Heart right ventricle (tissue), 16 donors: ENCODE measurements at regions of chr9 and their contacts with region 1.

Region 1: GRCh38 chr9:96418074-96418809 is at the start of gene ZNF367:
- DNase-seq: peak; percentile 98
- ATAC-seq: peak; percentile 90 to 96 (median 92)
- H3K4me3 ChIP-seq: peak within 1 kb of the TSS; percentile 56 to 97 (median 85)
- H3K27ac ChIP-seq: peak within 1 kb of the TSS; percentile 95 to 100 (median 99)
- H3K4me1 ChIP-seq: peaks cover 7 to 52% (median 33%) of the 10 kb centered on the region in 9 donors
- H3K27me3 ChIP-seq: no peaks in the 10 kb centered on the region
- CTCF ChIP-seq: no peak
- total RNA-seq, gene ZNF367: 2.4 to 6.4 (median 4.0) TPM

Region 2: GRCh38 chr9:96344458-96345180 is 73.6 kb before region 1 on chr9:
- intact Hi-C with region 1: loop called in 1 of 10 experiments (anchors 5 kb)
- DNase-seq: peak; percentile 23 to 59
- ATAC-seq: peak; percentile 78 to 95 (median 92)
- H3K4me3 ChIP-seq: no peak overlapping the region
- H3K27ac ChIP-seq: peak overlapping the region in 9 of 10 donors; percentile 35 to 69 (median 49)
- H3K4me1 ChIP-seq: peaks cover 3 to 27% (median 17%) of the 10 kb centered on the region in 9 donors
- H3K27me3 ChIP-seq: no peaks in the 10 kb centered on the region
- CTCF ChIP-seq: no peak

Region 3: DNA sequence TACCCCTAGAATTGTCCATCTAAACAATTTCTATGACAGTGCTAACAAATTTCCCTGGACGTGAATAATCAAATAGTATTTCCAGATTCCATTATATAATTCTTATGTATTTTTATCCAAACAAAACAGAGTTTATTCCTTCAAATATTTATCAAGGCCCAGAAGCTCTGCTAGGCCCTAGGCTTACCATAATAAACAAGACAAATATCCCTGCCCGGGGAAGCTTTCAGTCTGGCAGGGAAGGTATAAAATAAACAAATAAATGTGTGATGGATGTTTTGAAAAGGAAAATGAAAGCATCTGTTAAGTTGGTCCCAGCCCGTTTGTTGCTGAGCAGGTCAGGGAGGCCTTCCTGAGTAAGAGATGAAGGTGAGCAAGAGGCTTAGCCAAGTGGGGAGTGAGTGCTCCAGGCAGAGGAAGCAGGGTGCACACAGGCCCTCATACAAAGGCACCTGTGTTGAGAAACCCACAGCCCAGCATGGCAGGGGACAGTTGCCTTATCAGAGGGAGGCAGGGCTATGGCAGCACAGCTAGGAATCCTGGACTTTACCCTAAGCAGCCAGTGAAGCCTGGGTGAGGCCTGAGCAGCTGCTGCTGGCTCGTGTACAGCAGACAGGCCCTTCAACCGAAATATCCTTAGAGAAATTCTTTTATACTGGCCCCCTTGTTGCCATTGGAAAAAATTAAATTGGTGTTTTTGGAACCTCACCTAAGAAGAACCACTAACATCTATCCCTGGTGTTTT is 27.0 kb before region 1 on chr9:
- intact Hi-C with region 1: loop called in 1 of 10 experiments (anchors 2 kb)
- DNase-seq: no peak
- ATAC-seq: peak in 1 of 8 donors; percentile 43
- H3K4me3 ChIP-seq: no peak overlapping the region
- H3K27ac ChIP-seq: peak overlapping the region in 1 of 10 donors; percentile 8
- H3K4me1 ChIP-seq: peaks cover 0 to 8% (median 5%) of the 10 kb centered on the region in 9 donors
- H3K27me3 ChIP-seq: no peaks in the 10 kb centered on the region
- CTCF ChIP-seq: no peak

Region 4: GRCh38 chr9:96486368-96487028 is 68.3 kb after region 1 on chr9:
- intact Hi-C with region 1: loop called in 1 of 10 experiments (anchors 5 kb)
- DNase-seq: peak; percentile 68 to 75
- ATAC-seq: peak; percentile 50 to 88 (median 82)
- H3K4me3 ChIP-seq: peak overlapping the region in 1 of 10 donors; percentile 6
- H3K27ac ChIP-seq: peak overlapping the region; percentile 13 to 86 (median 62)
- H3K4me1 ChIP-seq: peaks cover 4 to 47% (median 34%) of the 10 kb centered on the region in 9 donors
- H3K27me3 ChIP-seq: no peaks in the 10 kb centered on the region
- CTCF ChIP-seq: no peak

Region 5: GRCh38 chr9:96667361-96667728 is 249.1 kb after region 1 on chr9:
- intact Hi-C with region 1: loop called in 1 of 10 experiments (anchors 5 kb)
- DNase-seq: no peak
- ATAC-seq: no peak
- H3K4me3 ChIP-seq: no peak overlapping the region
- H3K27ac ChIP-seq: no peak overlapping the region
- H3K4me1 ChIP-seq: peaks cover 0 to 4% (median 0%) of the 10 kb centered on the region in 9 donors
- H3K27me3 ChIP-seq: no peaks in the 10 kb centered on the region
- CTCF ChIP-seq: no peak